CD4-positive, alpha-beta T cell (primary cell): ENCODE measurements at regions of chr13 and their contacts with region 1.

Region 1: GRCh38 chr13:20160847-20161274 is at the start of gene GJA3:
- DNase-seq: peak in 11 of 14 experiments; percentile 13 to 67 (median 47)
- ATAC-seq: peak; percentile 54
- H3K4me3 ChIP-seq: peak within 1 kb of the TSS; percentile 40
- H3K4me3 Mint-ChIP-seq: peak within 1 kb of the TSS; percentile 90
- H3K27ac ChIP-seq: no peak within 1 kb of the TSS
- H3K27ac Mint-ChIP-seq: no peak within 1 kb of the TSS
- H3K4me1 ChIP-seq: peaks cover 17% of the 10 kb centered on the region
- H3K4me1 Mint-ChIP-seq: peaks cover 23% of the 10 kb centered on the region
- H3K27me3 ChIP-seq: peaks cover 31 to 46% of the 10 kb centered on the region in 2 experiments
- H3K27me3 Mint-ChIP-seq: peaks cover 48% of the 10 kb centered on the region
- CTCF ChIP-seq: no peak
- total RNA-seq, gene GJA3: not detected

Region 2: DNA sequence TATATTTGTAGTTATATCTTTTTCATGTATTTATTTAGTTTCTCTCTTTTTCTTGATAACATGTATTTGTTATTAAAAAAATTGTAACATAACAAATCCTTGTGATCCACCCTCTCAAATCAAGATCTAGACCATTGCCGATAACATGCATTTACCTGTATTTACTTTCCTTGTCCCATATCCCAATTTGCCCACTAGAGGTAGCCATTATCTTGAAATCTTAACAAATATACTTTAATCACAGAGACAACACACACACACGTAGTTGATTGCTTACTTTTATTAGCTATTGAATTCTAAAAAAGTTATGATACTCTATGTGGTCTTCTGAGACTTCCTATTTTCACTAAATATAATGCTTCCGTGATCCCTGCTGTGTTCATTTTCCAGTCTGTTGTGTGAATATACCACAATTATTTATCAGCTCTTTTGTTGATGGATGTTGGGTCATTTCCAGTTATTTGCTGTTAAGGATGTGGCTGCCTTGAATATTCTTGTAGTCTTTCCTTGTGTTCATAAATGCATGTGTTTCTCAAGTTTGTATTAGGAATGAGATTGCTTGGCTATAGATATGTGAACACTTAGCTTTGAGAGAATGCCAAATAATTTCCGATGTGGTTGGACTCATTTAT is 233.6 kb before region 1 on chr13:
- CTCF ChIA-PET with region 1: no interaction called
- POLR2A ChIA-PET with region 1: no interaction called
- intact Hi-C with region 1: loop called (anchors 2 to 5 kb)
- DNase-seq: peak in 3 of 14 experiments; percentile 51 to 65 (median 58)
- ATAC-seq: no peak
- H3K4me3 ChIP-seq: no peak overlapping the region
- H3K4me3 Mint-ChIP-seq: no peak overlapping the region
- H3K27ac ChIP-seq: no peak overlapping the region
- H3K27ac Mint-ChIP-seq: no peak overlapping the region
- H3K4me1 ChIP-seq: no peaks in the 10 kb centered on the region
- H3K4me1 Mint-ChIP-seq: no peaks in the 10 kb centered on the region
- H3K27me3 ChIP-seq: no peaks in the 10 kb centered on the region
- H3K27me3 Mint-ChIP-seq: no peaks in the 10 kb centered on the region
- CTCF ChIP-seq: peak; percentile 72

Region 3: GRCh38 chr13:19984430-19985218 is 176.2 kb before region 1 on chr13:
- CTCF ChIA-PET with region 1: no interaction called
- POLR2A ChIA-PET with region 1: no interaction called
- intact Hi-C with region 1: loop called (anchors 1 to 5 kb)
- DNase-seq: peak in 3 of 14 experiments; percentile 30 to 59 (median 57)
- ATAC-seq: peak; percentile 74
- H3K4me3 ChIP-seq: no peak overlapping the region
- H3K4me3 Mint-ChIP-seq: no peak overlapping the region
- H3K27ac ChIP-seq: no peak overlapping the region
- H3K27ac Mint-ChIP-seq: peak overlapping the region; percentile 16
- H3K4me1 ChIP-seq: peaks cover 25% of the 10 kb centered on the region
- H3K4me1 Mint-ChIP-seq: peaks cover 49% of the 10 kb centered on the region
- H3K27me3 ChIP-seq: no peaks in the 10 kb centered on the region
- H3K27me3 Mint-ChIP-seq: no peaks in the 10 kb centered on the region
- CTCF ChIP-seq: peak; percentile 37

Region 4: DNA sequence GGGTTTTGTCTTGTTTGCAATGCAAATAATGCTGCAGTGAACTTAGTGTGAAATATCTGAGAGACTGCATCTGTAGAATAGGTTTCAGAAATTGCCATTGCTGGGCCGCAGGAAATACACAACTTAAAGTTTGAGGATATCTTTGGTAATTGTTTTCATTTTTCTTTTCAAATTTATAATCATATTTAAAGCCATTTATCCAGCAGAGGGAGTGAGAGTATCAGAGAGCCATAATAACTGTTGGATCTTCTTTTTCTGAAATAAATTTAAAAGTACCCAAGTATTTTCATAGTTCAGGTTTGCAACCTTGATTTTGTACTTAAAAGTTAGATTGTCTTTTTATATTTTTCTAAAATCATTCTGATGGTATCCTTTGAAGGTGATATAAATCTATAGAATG is 102.9 kb before region 1 on chr13:
- CTCF ChIA-PET with region 1: interaction called, 3 read pairs
- POLR2A ChIA-PET with region 1: no interaction called
- intact Hi-C with region 1: loop called in 1 of 2 experiments (anchors 1 kb)
- DNase-seq: no peak
- ATAC-seq: no peak
- H3K4me3 ChIP-seq: no peak overlapping the region
- H3K4me3 Mint-ChIP-seq: no peak overlapping the region
- H3K27ac ChIP-seq: no peak overlapping the region
- H3K27ac Mint-ChIP-seq: no peak overlapping the region
- H3K4me1 ChIP-seq: no peaks in the 10 kb centered on the region
- H3K4me1 Mint-ChIP-seq: peaks cover 10% of the 10 kb centered on the region
- H3K27me3 ChIP-seq: no peaks in the 10 kb centered on the region
- H3K27me3 Mint-ChIP-seq: no peaks in the 10 kb centered on the region
- CTCF ChIP-seq: no peak

Region 5: GRCh38 chr13:20090349-20090748 is 70.5 kb before region 1 on chr13:
- CTCF ChIA-PET with region 1: no interaction called
- POLR2A ChIA-PET with region 1: interaction called, 4 read pairs
- intact Hi-C with region 1: loop called (anchors 1 kb)
- DNase-seq: peak in 3 of 14 experiments; percentile 16 to 20 (median 19)
- ATAC-seq: peak; percentile 57
- H3K4me3 ChIP-seq: no peak overlapping the region
- H3K4me3 Mint-ChIP-seq: no peak overlapping the region
- H3K27ac ChIP-seq: no peak overlapping the region
- H3K27ac Mint-ChIP-seq: no peak overlapping the region
- H3K4me1 ChIP-seq: no peaks in the 10 kb centered on the region
- H3K4me1 Mint-ChIP-seq: no peaks in the 10 kb centered on the region
- H3K27me3 ChIP-seq: no peaks in the 10 kb centered on the region
- H3K27me3 Mint-ChIP-seq: no peaks in the 10 kb centered on the region
- CTCF ChIP-seq: peak; percentile 28

Region 6: GRCh38 chr13:20127577-20128466 is 33.0 kb before region 1 on chr13:
- CTCF ChIA-PET with region 1: interaction called, 3 read pairs
- POLR2A ChIA-PET with region 1: interaction called, 3 read pairs
- intact Hi-C with region 1: loop called in 1 of 2 experiments (anchors 5 kb)
- DNase-seq: peak in 7 of 14 experiments; percentile 20 to 67 (median 49)
- ATAC-seq: peak; percentile 66
- H3K4me3 ChIP-seq: peak overlapping the region; percentile 56
- H3K4me3 Mint-ChIP-seq: peak overlapping the region; percentile 71
- H3K27ac ChIP-seq: no peak overlapping the region
- H3K27ac Mint-ChIP-seq: no peak overlapping the region
- H3K4me1 ChIP-seq: peaks cover 23% of the 10 kb centered on the region
- H3K4me1 Mint-ChIP-seq: no peaks in the 10 kb centered on the region
- H3K27me3 ChIP-seq: peaks cover 36 to 51% of the 10 kb centered on the region in 2 experiments
- H3K27me3 Mint-ChIP-seq: peaks cover 24% of the 10 kb centered on the region
- CTCF ChIP-seq: peak; percentile 29